Naive thymus-derived CD4-positive, alpha-beta T cell (primary cell): ENCODE measurements at regions of chr5 and their contacts with region 1.

Region 1: GRCh38 chr5:134904630-134905245 is at the start of gene PCBD2:
- DNase-seq: peak; percentile 83 to 96 (median 90)
- ATAC-seq: peak; percentile 94
- H3K4me3 ChIP-seq: peak within 1 kb of the TSS; percentile 71
- H3K4me3 Mint-ChIP-seq: peak within 1 kb of the TSS; percentile 90 to 99 (median 96)
- H3K27ac ChIP-seq: peak within 1 kb of the TSS; percentile 90
- H3K27ac Mint-ChIP-seq: peak within 1 kb of the TSS; percentile 93 to 100 (median 99)
- H3K4me1 ChIP-seq: no peaks in the 10 kb centered on the region
- H3K4me1 Mint-ChIP-seq: peaks cover 0 to 25% (median 5%) of the 10 kb centered on the region in 7 donors
- H3K27me3 ChIP-seq: no peaks in the 10 kb centered on the region
- H3K27me3 Mint-ChIP-seq: no peaks in the 10 kb centered on the region
- total RNA-seq, gene PCBD2: 10.6 to 15.8 (median 14.3) TPM

Region 2: DNA sequence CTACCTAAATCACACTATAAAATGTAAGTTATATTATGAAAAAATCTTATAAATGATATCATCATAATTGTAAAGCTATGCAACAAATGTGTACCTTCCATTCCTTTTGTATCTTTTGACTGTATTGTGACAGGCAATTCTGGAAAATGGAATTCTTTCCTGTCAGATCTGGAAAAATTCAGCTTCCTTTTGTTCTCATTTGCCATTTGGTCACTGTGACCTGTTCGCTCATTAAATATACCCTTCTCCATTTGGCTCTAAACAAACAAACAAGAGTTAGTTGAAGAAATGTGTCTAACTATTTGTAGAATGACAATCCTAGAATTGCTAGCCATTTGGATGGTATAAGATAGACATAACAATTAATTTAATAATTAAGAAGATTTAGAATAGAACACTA is 600.4 kb before region 1 on chr5:
- CTCF ChIA-PET with region 1: interaction called, 3 read pairs
- POLR2A ChIA-PET with region 1: no interaction called
- intact Hi-C with region 1: loop called (anchors 1 to 2 kb)
- DNase-seq: no peak
- ATAC-seq: no peak
- H3K4me3 ChIP-seq: no peak overlapping the region
- H3K4me3 Mint-ChIP-seq: no peak overlapping the region
- H3K27ac ChIP-seq: no peak overlapping the region
- H3K27ac Mint-ChIP-seq: no peak overlapping the region
- H3K4me1 ChIP-seq: no peaks in the 10 kb centered on the region
- H3K4me1 Mint-ChIP-seq: peaks cover 0 to 5% (median 0%) of the 10 kb centered on the region in 7 donors
- H3K27me3 ChIP-seq: no peaks in the 10 kb centered on the region
- H3K27me3 Mint-ChIP-seq: peaks cover 0 to 8% (median 0%) of the 10 kb centered on the region in 5 donors

Region 3: DNA sequence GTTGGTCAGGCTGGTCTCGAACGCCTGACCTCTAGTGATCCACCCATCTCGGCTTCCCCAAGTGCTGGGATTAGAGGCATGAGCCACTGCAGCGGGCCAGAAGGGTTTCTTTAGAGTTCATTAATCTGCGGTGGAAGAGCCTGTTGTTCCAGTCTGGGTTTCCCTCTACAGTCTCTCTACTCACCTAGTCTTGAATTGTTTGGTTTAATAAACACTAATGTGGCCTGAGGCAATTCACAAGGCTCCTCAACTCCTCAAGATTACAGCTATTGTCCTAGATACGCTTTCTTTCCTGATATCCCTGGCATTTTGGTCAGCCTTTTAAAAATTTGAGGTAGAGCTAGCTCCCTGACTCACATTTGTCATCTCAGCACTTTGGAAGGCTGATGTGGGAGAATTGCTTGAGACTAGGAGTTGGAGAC is 267.6 kb before region 1 on chr5:
- CTCF ChIA-PET with region 1: no interaction called
- POLR2A ChIA-PET with region 1: no interaction called
- intact Hi-C with region 1: loop called in 1 of 2 experiments (anchors 1 kb)
- DNase-seq: no peak
- ATAC-seq: no peak
- H3K4me3 ChIP-seq: no peak overlapping the region
- H3K4me3 Mint-ChIP-seq: no peak overlapping the region
- H3K27ac ChIP-seq: no peak overlapping the region
- H3K27ac Mint-ChIP-seq: no peak overlapping the region
- H3K4me1 ChIP-seq: no peaks in the 10 kb centered on the region
- H3K4me1 Mint-ChIP-seq: peaks cover 0 to 10% (median 4%) of the 10 kb centered on the region in 7 donors
- H3K27me3 ChIP-seq: no peaks in the 10 kb centered on the region
- H3K27me3 Mint-ChIP-seq: no peaks in the 10 kb centered on the region

Region 4: GRCh38 chr5:134784241-134784920 is 120.4 kb before region 1 on chr5:
- CTCF ChIA-PET with region 1: interaction called, 4 read pairs
- POLR2A ChIA-PET with region 1: interaction called, 4 read pairs
- intact Hi-C with region 1: loop called (anchors 1 kb)
- DNase-seq: peak in 5 of 9 donors; percentile 1 to 28 (median 21)
- ATAC-seq: no peak
- H3K4me3 ChIP-seq: no peak overlapping the region
- H3K4me3 Mint-ChIP-seq: no peak overlapping the region
- H3K27ac ChIP-seq: no peak overlapping the region
- H3K27ac Mint-ChIP-seq: peak overlapping the region in 4 of 9 donors; percentile 14 to 31 (median 24)
- H3K4me1 ChIP-seq: no peaks in the 10 kb centered on the region
- H3K4me1 Mint-ChIP-seq: peaks cover 0 to 3% (median 0%) of the 10 kb centered on the region in 7 donors
- H3K27me3 ChIP-seq: no peaks in the 10 kb centered on the region
- H3K27me3 Mint-ChIP-seq: no peaks in the 10 kb centered on the region

Region 5: GRCh38 chr5:134851307-134851923 is 53.3 kb before region 1 on chr5:
- CTCF ChIA-PET with region 1: interaction called, 3 read pairs
- POLR2A ChIA-PET with region 1: interaction called, 12 read pairs
- intact Hi-C with region 1: loop called in 1 of 2 experiments (anchors 1 kb)
- DNase-seq: no peak
- ATAC-seq: peak; percentile 52
- H3K4me3 ChIP-seq: no peak overlapping the region
- H3K4me3 Mint-ChIP-seq: peak overlapping the region in 1 of 10 donors; percentile 39
- H3K27ac ChIP-seq: no peak overlapping the region
- H3K27ac Mint-ChIP-seq: peak overlapping the region in 4 of 9 donors; percentile 14 to 51 (median 32)
- H3K4me1 ChIP-seq: peaks cover 11 to 14% of the 10 kb centered on the region in 2 donors
- H3K4me1 Mint-ChIP-seq: peaks cover 12 to 68% (median 51%) of the 10 kb centered on the region in 7 donors
- H3K27me3 ChIP-seq: no peaks in the 10 kb centered on the region
- H3K27me3 Mint-ChIP-seq: no peaks in the 10 kb centered on the region

Region 6: DNA sequence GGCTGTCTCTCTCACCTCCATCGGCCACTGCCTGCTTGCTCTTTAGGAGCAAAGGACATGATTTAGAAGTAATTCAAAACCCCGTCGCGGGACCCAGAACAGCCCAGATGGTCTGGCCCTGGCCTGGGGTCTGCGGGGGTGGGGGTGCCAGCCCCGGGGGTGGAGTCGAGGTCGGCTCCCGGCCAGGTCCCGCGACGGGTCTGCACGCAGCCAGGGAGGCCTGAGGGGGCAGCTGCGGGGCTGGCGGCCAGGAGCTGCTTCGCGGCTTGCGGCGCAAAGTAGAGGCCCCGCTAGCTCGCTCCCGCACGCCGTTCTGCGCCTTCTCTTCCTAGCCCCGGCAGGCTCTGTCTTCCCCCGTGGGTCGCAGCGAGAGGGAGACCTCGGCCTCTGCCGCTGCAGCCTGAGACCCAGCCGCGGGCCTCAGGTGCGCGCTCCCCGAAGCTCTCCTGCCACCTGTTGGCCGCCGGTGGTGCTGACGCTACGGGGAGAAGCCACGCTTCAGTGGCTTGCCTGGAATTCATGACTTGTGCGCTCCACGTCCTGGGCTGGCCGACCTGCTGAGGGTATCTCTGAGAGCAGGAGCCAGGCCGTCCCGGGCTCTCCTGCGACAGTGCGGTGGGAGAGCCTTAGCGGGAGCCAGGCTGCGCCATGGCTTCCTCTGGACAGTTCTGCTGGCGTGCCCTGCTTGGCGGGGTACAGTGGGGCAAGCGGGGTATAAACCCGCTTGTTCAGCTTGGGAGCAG is 286.5 kb after region 1 on chr5:
- CTCF ChIA-PET with region 1: no interaction called
- POLR2A ChIA-PET with region 1: no interaction called
- intact Hi-C with region 1: loop called in 1 of 2 experiments (anchors 5 kb)
- DNase-seq: peak; percentile 44 to 77 (median 68)
- ATAC-seq: peak; percentile 95
- H3K4me3 ChIP-seq: peak overlapping the region; percentile 44
- H3K4me3 Mint-ChIP-seq: peak overlapping the region; percentile 75 to 89 (median 80)
- H3K27ac ChIP-seq: no peak overlapping the region
- H3K27ac Mint-ChIP-seq: no peak overlapping the region
- H3K4me1 ChIP-seq: peaks cover 0 to 7% of the 10 kb centered on the region in 2 donors
- H3K4me1 Mint-ChIP-seq: peaks cover 0 to 8% (median 2%) of the 10 kb centered on the region in 7 donors
- H3K27me3 ChIP-seq: no peaks in the 10 kb centered on the region
- H3K27me3 Mint-ChIP-seq: peaks cover 19 to 76% (median 25%) of the 10 kb centered on the region in 5 donors

Region 7: DNA sequence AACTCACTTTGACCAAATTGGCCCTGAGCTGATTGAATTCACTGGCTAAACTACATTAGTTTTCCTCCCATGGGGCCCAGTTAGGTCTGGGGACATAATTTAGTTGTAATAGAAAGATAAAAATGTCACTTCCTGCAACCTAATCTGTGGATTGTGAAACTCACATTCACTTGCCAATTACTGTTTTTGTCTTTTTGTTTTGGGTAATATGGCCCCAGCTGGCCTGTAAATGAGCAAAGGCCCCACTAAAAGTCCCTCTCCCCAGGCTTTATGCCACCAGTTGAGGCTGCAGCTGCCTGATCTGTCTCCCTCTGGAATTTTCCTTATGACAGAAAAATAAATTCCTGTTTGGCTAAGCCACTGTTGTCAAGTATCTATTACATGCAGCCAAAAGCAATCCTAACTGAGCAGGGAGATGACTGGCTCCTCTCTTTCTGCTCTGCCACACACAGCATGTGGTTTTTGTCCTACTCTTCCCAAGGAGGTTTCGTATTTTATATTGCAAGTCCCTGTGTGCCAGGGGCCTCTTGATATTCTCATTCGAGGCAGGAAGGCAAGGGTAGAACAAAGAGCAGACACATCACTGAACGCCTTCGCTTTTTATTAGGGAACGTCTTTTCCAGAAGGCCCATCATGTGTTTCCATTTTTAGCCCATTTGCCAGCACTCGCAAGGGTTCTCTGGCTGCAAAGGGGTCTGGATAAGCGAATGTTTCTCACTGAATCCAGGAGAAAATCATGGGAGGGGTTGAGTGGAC is 905.6 kb after region 1 on chr5:
- CTCF ChIA-PET with region 1: no interaction called
- POLR2A ChIA-PET with region 1: no interaction called
- intact Hi-C with region 1: no loop called
- DNase-seq: no peak
- ATAC-seq: no peak
- H3K4me3 ChIP-seq: no peak overlapping the region
- H3K4me3 Mint-ChIP-seq: no peak overlapping the region
- H3K27ac ChIP-seq: no peak overlapping the region
- H3K27ac Mint-ChIP-seq: no peak overlapping the region
- H3K4me1 ChIP-seq: no peaks in the 10 kb centered on the region
- H3K4me1 Mint-ChIP-seq: no peaks in the 10 kb centered on the region
- H3K27me3 ChIP-seq: no peaks in the 10 kb centered on the region
- H3K27me3 Mint-ChIP-seq: peaks cover 0 to 53% (median 20%) of the 10 kb centered on the region in 5 donors

Region 8: GRCh38 chr5:136560126-136560525 is 1655.4 kb after region 1 on chr5:
- CTCF ChIA-PET with region 1: no interaction called
- POLR2A ChIA-PET with region 1: no interaction called
- intact Hi-C with region 1: no loop called
- DNase-seq: no peak
- ATAC-seq: no peak
- H3K4me3 ChIP-seq: no peak overlapping the region
- H3K4me3 Mint-ChIP-seq: no peak overlapping the region
- H3K27ac ChIP-seq: no peak overlapping the region
- H3K27ac Mint-ChIP-seq: no peak overlapping the region
- H3K4me1 ChIP-seq: peaks cover 0 to 19% of the 10 kb centered on the region in 2 donors
- H3K4me1 Mint-ChIP-seq: no peaks in the 10 kb centered on the region
- H3K27me3 ChIP-seq: no peaks in the 10 kb centered on the region
- H3K27me3 Mint-ChIP-seq: no peaks in the 10 kb centered on the region